CD8-positive, alpha-beta T cell (primary cell): ENCODE measurements at regions of chr2 and their contacts with region 1.

Region 1: GRCh38 chr2:144382849-144383248 is 137.1 kb downstream of the ZEB2 start:
- DNase-seq: peak in 4 of 9 experiments; percentile 26 to 89 (median 62)
- ATAC-seq: peak; percentile 93
- H3K4me3 ChIP-seq: no peak overlapping the region
- H3K4me3 Mint-ChIP-seq: peak overlapping the region; percentile 3
- H3K27ac ChIP-seq: no peak overlapping the region
- H3K27ac Mint-ChIP-seq: peak overlapping the region; percentile 15
- H3K4me1 ChIP-seq: peaks cover 20% of the 10 kb centered on the region
- H3K4me1 Mint-ChIP-seq: peaks cover 29% of the 10 kb centered on the region
- H3K27me3 ChIP-seq: no peaks in the 10 kb centered on the region
- H3K27me3 Mint-ChIP-seq: no peaks in the 10 kb centered on the region
- CTCF ChIP-seq: no peak

Region 2: GRCh38 chr2:144249035-144249637 is 133.7 kb before region 1 on chr2:
- CTCF ChIA-PET with region 1: no interaction called
- POLR2A ChIA-PET with region 1: no interaction called
- intact Hi-C with region 1: no loop called
- DNase-seq: no peak
- ATAC-seq: no peak
- H3K4me3 ChIP-seq: no peak overlapping the region
- H3K4me3 Mint-ChIP-seq: no peak overlapping the region
- H3K27ac ChIP-seq: no peak overlapping the region
- H3K27ac Mint-ChIP-seq: peak overlapping the region; percentile 9
- H3K4me1 ChIP-seq: no peaks in the 10 kb centered on the region
- H3K4me1 Mint-ChIP-seq: peaks cover 9% of the 10 kb centered on the region
- H3K27me3 ChIP-seq: no peaks in the 10 kb centered on the region
- H3K27me3 Mint-ChIP-seq: no peaks in the 10 kb centered on the region
- CTCF ChIP-seq: no peak

Region 3: DNA sequence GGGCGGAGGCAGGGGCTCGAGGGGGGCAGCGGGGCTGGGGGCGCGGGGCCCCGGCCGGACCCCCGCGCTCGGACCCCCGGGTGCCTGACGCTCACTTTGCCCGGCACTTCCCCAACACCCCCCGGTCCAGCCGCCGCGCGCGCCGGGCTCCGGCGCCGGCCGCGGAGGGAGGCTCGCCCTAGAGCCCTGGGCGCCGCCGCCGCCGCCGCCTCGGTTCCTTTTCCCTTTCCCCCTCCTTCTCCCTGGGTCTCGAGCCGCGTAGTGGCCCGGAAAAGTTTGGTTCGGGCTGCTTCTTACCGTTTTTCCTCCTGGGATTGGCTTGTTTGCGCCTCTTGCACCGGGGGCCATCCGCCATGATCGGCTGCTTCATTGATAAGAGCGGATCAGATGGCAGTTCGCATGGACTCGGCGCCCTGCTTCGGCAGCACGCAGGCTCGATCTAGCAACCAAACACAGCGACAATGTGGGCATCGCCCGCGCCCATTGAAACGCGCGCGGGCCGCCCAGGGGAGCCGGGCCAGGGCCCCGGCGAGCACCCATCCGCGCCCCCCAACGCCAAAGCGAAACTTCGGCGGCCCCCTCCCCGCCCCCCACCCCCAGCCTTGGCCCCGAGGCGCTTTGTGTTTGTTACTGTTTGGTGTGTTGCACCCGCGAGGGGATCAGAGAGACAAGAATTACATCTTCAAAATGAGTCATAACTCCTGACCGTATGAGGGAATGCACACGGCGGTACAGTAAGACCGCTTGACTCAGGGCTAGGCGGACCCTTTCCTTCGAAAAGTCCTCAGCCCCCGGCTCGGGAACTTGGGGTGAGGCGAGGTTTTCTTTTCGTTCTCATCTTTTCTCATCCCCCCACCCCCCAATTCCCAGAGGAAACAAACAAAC is 134.4 kb after region 1 on chr2:
- CTCF ChIA-PET with region 1: no interaction called
- POLR2A ChIA-PET with region 1: no interaction called
- intact Hi-C with region 1: loop called in 1 of 2 experiments (anchors 5 kb)
- DNase-seq: peak in 7 of 9 experiments; percentile 31 to 88 (median 66)
- ATAC-seq: peak; percentile 67
- H3K4me3 ChIP-seq: peak overlapping the region; percentile 66 to 69
- H3K4me3 Mint-ChIP-seq: no peak overlapping the region
- H3K27ac ChIP-seq: peak overlapping the region; percentile 65 to 92
- H3K27ac Mint-ChIP-seq: peak overlapping the region; percentile 94
- H3K4me1 ChIP-seq: peaks cover 13% of the 10 kb centered on the region
- H3K4me1 Mint-ChIP-seq: peaks cover 21% of the 10 kb centered on the region
- H3K27me3 ChIP-seq: peaks cover 0 to 30% of the 10 kb centered on the region in 2 experiments
- H3K27me3 Mint-ChIP-seq: peaks cover 39% of the 10 kb centered on the region
- CTCF ChIP-seq: no peak